ENCODE measurements at regions of chr12 and their contacts with region 1.

Region 1: GRCh38 chr12:9405886-9406563 is 197.8 kb upstream of the PZP start:
- DNase-seq: no peak
- H3K4me3 ChIP-seq: no peak overlapping the region
- H3K27ac ChIP-seq: no peak overlapping the region
- H3K4me1 ChIP-seq: no peaks in the 10 kb centered on the region
- H3K27me3 ChIP-seq: no peaks in the 10 kb centered on the region
- CTCF ChIP-seq: no peak
- POLR2A ChIP-seq: no peak

Region 2: DNA sequence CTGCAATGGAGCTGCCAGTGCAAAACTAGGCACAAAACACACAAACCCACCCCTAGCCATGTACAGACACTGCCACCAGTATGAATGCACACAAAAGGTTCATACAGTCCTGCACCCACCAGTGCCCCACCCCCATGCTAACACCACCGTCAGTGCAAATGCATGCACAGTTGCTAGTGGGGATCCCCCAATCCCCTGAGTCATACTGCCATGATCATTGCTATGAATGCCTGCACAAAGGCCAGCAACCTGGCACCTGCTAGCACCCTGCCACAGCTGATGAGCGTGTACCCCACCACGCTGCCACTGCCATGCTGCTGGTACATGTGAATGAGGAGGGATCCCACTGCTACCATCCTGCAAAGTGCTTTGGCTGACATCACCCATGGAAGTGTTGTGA is 221.7 kb before region 1 on chr12:
- CTCF ChIA-PET with region 1: no interaction called
- POLR2A ChIA-PET with region 1: no interaction called
- dilution Hi-C with region 1: no loop called
- intact Hi-C with region 1: no loop called
- DNase-seq: no peak
- H3K4me3 ChIP-seq: no peak overlapping the region
- H3K27ac ChIP-seq: no peak overlapping the region
- H3K4me1 ChIP-seq: no peaks in the 10 kb centered on the region
- H3K27me3 ChIP-seq: peaks cover 0 to 4% of the 10 kb centered on the region in 2 experiments
- CTCF ChIP-seq: no peak
- POLR2A ChIP-seq: no peak

Region 3: GRCh38 chr12:9449181-9449580 is 43.2 kb after region 1 on chr12:
- CTCF ChIA-PET with region 1: no interaction called
- POLR2A ChIA-PET with region 1: no interaction called
- dilution Hi-C with region 1: no loop called
- intact Hi-C with region 1: loop called (anchors 2 kb)
- DNase-seq: no peak
- H3K4me3 ChIP-seq: no peak overlapping the region
- H3K27ac ChIP-seq: no peak overlapping the region
- H3K4me1 ChIP-seq: peaks cover 4% of the 10 kb centered on the region
- H3K27me3 ChIP-seq: no peaks in the 10 kb centered on the region
- CTCF ChIP-seq: no peak
- POLR2A ChIP-seq: no peak